ENCODE measurements at regions of chr7 and their contacts with region 1.

Region 1: DNA sequence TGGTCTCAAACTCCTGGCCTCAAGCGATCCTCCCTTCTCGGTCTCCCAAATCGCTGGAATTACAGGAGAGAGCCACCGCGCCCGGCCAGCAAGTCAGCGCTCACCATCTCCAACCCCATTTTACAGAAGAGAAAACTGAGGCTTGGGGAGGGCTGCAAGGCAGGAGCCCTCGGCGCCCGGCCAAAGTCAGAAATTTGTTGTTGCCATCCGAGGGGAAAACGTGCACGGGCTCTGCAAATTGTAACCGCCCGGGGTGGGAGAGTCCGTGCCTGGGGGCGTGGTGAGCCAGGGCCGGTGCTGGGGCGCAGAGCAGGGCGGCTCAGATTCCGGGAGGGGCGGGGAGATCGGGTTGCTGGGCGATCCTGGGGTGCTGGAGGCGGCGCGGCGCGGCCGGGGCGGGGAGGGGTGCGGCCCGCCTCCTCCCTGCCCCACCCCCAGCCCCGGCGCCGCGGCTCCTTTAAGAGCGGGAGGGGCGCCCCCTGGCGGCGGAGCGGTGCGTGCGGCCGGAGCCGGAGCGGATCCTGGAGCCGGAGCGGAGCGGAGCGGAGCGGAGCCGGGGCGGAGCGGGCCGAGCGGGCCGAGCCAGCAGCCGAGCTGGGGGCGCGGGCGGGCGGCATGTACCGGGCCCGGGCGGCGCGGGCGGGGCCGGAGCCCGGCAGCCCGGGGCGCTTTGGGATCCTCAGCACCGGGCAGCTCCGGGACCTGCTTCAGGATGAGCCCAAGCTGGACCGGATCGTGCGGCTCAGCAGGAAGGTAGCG is at the start of gene VPS37D:
- DNase-seq: peak; percentile 89
- ATAC-seq: peak; percentile 84
- H3K4me3 ChIP-seq: peak within 1 kb of the TSS; percentile 77
- H3K27ac ChIP-seq: no peak within 1 kb of the TSS
- H3K4me1 ChIP-seq: peaks cover 4% of the 10 kb centered on the region; the same call in 1 of the 2 replicates
- H3K27me3 ChIP-seq: no peaks in the 10 kb centered on the region
- CTCF ChIP-seq: peak; percentile 53
- total RNA-seq, gene VPS37D: 6.3 and 7.7 TPM in 2 replicates

Region 2: GRCh38 chr7:73623798-73624668 is 43.5 kb before region 1 on chr7 and contains the start of gene MLXIPL:
- CTCF ChIA-PET with region 1: no interaction called
- POLR2A ChIA-PET with region 1: no interaction called
- intact Hi-C with region 1: loop called (anchors 1 kb)
- DNase-seq: peak; percentile 86
- ATAC-seq: peak; percentile 93
- H3K4me3 ChIP-seq: peak within 1 kb of the TSS; percentile 74
- H3K27ac ChIP-seq: no peak within 1 kb of the TSS
- H3K4me1 ChIP-seq: peaks cover 5% of the 10 kb centered on the region; the same call in 1 of the 2 replicates
- H3K27me3 ChIP-seq: peaks cover 13% of the 10 kb centered on the region
- CTCF ChIP-seq: no peak
- total RNA-seq, gene MLXIPL: 4.7 and 6.9 TPM in 2 replicates

Region 3: GRCh38 chr7:73851410-73852234 is 184.1 kb after region 1 on chr7:
- CTCF ChIA-PET with region 1: no interaction called
- POLR2A ChIA-PET with region 1: no interaction called
- intact Hi-C with region 1: no loop called
- DNase-seq: peak; percentile 98
- ATAC-seq: peak; percentile 72
- H3K4me3 ChIP-seq: peak overlapping the region; percentile 27; the same call in 1 of the 2 replicates
- H3K27ac ChIP-seq: peak overlapping the region; percentile 97
- H3K4me1 ChIP-seq: peaks cover 51% of the 10 kb centered on the region
- H3K27me3 ChIP-seq: no peaks in the 10 kb centered on the region
- CTCF ChIP-seq: no peak